WTC11 (cell line): ENCODE measurements at regions of chr15 and their contacts with region 1.

Region 1: DNA sequence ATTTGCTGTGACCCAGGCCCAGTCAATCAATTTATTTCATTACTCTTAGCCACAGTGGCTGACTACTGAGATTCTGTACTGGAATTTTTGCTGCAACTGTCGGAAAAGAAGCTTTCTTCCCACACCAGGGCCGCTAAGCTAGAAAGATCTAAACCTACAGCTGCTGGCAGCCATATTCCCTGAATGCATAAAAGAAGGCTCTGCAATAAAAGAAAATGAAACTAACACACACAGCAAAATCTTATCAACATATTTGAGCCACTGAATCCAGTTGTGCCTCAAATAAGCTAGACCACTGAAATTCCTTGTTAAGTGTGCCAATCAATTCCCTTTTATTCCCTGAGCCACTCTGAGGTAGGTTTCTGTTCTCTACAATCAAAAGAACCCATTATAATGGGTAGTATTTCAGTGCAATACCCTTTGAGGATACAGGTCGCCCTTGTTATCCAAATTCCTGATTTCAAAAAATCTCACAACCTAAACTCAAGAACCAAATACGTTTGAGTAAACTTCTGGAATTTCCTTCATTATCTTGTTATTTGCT is 60.3 kb downstream of the MYO9A start:
- DNase-seq: no peak
- ATAC-seq: peak; percentile 60
- H3K4me3 Mint-ChIP-seq: no peak overlapping the region
- H3K27ac Mint-ChIP-seq: peak overlapping the region; percentile 45
- H3K4me1 Mint-ChIP-seq: peaks cover 29% of the 10 kb centered on the region
- H3K27me3 Mint-ChIP-seq: no peaks in the 10 kb centered on the region
- CTCF ChIP-seq: no peak

Region 2: DNA sequence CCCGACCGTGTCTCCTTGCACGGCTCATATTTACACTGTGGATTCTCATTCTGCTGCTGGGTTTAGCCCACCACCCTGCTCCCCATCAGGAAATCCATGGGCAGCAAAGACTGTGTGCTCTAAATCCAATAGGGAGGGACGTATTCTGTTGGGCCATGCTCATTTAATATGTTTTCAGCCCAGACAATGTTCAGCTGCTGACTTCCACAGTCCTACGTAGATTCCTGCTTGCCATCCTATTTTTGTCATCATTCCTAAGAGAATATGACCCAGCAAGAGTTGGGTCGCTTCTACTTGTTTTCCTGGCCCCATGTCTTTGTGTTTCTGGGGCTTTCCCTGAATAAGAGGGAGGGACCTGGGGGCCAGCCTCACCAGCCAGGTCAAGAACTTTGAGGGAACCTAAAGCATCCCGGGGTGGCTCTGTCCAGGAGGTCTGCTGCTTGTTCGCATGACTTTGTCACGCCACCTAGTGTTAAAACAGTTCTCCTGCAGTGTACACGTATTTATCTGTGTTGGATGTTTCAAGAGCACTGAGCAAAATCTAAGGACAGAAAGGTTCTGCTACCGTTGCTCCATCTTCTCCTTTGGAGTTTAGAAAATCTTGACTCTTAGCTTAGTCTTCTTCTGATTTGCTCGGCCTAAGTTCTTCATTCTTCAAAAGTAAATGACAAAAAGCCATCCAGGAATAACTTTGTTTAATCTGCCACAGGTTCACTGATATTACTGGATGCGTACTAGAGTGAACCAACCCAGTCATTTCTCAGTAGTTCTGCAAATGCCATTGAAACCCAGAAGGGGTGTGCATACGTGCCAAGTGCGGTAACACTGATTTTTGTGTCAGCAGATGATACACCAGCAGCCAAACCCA is 327.1 kb before region 1 on chr15:
- CTCF ChIA-PET with region 1: no interaction called
- POLR2A ChIA-PET with region 1: interaction called, 19 read pairs
- DNase-seq: peak; percentile 40
- ATAC-seq: peak; percentile 78
- H3K4me3 Mint-ChIP-seq: no peak overlapping the region
- H3K27ac Mint-ChIP-seq: no peak overlapping the region
- H3K4me1 Mint-ChIP-seq: no peaks in the 10 kb centered on the region
- H3K27me3 Mint-ChIP-seq: no peaks in the 10 kb centered on the region
- CTCF ChIP-seq: peak; percentile 80